Panc1 (cell line): ENCODE measurements at regions of chr1 and their contacts with region 1.

Region 1: GRCh38 chr1:173202430-173203145 is 4.5 kb downstream of the TNFSF4 start:
- DNase-seq: peak; percentile 46
- ATAC-seq: peak; percentile 80
- H3K4me3 ChIP-seq: peak overlapping the region in 1 of 2 experiments; percentile 12; a peak in 1 of 4 replicates
- H3K27ac ChIP-seq: no peak overlapping the region
- H3K4me1 ChIP-seq: no peaks in the 10 kb centered on the region
- H3K27me3 ChIP-seq: no peaks in the 10 kb centered on the region
- CTCF ChIP-seq: peak; percentile 54; the same call in 1 of the 2 replicates

Region 2: GRCh38 chr1:172826096-172826743 is 376.4 kb before region 1 on chr1:
- CTCF ChIA-PET with region 1: interaction called, 10 read pairs
- POLR2A ChIA-PET with region 1: no interaction called
- in situ Hi-C with region 1: no loop called
- intact Hi-C with region 1: loop called (anchors 1 kb)
- DNase-seq: peak; percentile 48
- ATAC-seq: peak; percentile 70; the same call in 1 of the 2 replicates
- H3K4me3 ChIP-seq: no peak overlapping the region
- H3K27ac ChIP-seq: no peak overlapping the region
- H3K4me1 ChIP-seq: no peaks in the 10 kb centered on the region
- H3K27me3 ChIP-seq: no peaks in the 10 kb centered on the region
- CTCF ChIP-seq: peak; percentile 61

Region 3: DNA sequence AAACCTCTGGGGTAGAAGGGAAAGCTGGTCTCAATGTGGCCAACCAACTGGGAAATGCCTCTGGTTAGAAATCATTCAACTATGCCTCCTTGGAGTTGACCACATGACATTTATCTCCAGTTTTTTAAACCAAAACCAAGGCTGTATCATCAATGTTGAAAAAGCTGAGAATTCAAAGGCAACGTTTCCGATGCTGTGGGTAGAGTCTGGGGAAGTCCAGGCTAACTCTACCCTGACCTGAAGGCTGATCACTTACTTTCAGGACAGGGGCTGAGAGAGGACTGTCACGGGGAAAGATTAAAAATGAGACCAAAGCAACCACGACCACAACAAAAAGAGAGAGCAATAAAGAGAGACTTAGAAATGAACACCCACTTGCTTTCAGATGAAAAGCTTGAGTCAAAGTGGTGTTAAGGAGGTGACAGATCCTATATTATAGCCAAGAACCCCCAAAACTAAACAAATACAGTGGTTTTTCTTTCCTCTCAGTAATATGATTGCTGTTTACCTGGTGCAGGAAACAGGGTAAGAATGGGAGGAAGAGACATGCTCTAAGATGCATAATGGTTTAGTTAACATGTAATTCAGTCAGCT is 95.3 kb after region 1 on chr1:
- CTCF ChIA-PET with region 1: no interaction called
- POLR2A ChIA-PET with region 1: no interaction called
- in situ Hi-C with region 1: no loop called
- intact Hi-C with region 1: no loop called
- DNase-seq: no peak
- ATAC-seq: no peak
- H3K4me3 ChIP-seq: no peak overlapping the region
- H3K27ac ChIP-seq: no peak overlapping the region
- H3K4me1 ChIP-seq: no peaks in the 10 kb centered on the region
- H3K27me3 ChIP-seq: no peaks in the 10 kb centered on the region
- CTCF ChIP-seq: no peak